Common myeloid progenitor, CD34-positive (primary cell): ENCODE measurements at regions of chr3 and their contacts with region 1.

Region 1: GRCh38 chr3:42012935-42013690 is 51.2 kb upstream of the ULK4 start:
- DNase-seq: peak; percentile 78 to 94 (median 91)
- H3K4me3 ChIP-seq: peak overlapping the region; percentile 41 to 87 (median 83)
- H3K27ac ChIP-seq: peak overlapping the region; percentile 80 to 94
- H3K4me1 ChIP-seq: peaks cover 18 to 44% (median 35%) of the 10 kb centered on the region in 4 experiments
- H3K27me3 ChIP-seq: no peaks in the 10 kb centered on the region

Region 2: DNA sequence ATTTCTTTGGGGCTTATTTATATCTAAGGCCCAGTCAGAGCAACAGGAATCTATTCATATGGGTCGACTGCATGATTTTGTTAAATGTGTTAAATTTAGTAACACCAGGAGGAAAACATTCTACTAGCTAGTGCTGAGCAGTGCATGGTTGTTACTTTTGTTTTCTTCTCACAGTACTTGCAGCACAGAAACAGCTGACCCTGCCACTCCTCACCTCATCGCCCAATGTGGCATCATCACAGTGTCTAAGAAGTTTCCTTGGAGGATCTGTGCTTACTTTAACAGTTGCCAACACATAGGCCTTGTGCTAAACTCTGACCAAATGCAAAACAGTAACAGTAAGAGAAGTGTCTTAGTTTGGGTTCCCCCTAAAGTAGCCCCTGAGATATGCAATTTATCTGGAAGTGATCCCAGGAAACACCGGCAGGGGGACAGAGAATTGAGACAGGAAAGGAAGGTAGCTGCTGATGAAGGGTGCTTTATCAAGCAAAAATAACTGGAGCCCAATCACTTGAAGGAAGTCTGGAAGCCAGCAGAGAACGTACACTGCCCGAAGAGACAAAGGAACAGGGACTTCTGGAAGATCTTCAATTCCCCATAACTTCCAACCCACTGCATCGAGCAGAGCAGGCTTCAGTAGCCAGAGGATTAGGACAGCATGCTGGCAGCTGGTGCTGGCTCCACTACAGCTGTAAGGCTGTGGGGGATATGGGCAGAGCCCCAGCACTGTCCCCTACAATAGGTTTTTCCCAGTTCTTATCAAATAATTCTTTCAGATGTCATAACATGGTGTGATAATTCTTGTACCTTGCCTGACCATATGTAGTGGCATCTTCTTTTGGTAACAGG is 15.2 kb before region 1 on chr3:
- CTCF ChIA-PET with region 1: interaction called, 13 read pairs
- POLR2A ChIA-PET with region 1: no interaction called
- DNase-seq: peak; percentile 46 to 64 (median 56)
- H3K4me3 ChIP-seq: no peak overlapping the region
- H3K27ac ChIP-seq: no peak overlapping the region
- H3K4me1 ChIP-seq: peaks cover 0 to 6% (median 3%) of the 10 kb centered on the region in 4 experiments
- H3K27me3 ChIP-seq: no peaks in the 10 kb centered on the region